ENCODE measurements at regions of chr19 and their contacts with region 1.

Region 1: GRCh38 chr19:53195265-53195903 is 2.2 kb upstream of the ZNF665 start:
- DNase-seq: peak; percentile 74
- ATAC-seq: peak; percentile 69

Region 2: DNA sequence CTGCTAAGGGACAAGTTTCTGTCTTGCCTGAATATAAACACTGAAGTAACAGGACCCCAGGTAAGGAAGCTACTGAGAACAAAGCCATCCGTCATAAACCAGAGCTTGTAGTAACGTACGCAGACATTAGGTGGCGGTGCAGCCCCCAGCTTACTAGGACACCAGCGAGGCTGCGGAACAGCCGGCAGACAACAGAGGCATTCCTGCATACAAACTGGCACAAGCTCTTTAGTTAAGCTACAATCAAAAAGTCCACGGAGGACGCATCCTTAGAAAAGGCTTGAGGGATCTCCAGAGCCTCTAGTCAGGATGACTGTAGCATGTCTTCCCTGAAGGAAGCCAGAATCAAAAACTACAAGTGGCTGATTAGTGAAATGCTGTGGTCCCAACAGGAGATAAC is 118.4 kb before region 1 on chr19:
- intact Hi-C with region 1: loop called (anchors 5 kb)
- DNase-seq: peak; percentile 67
- ATAC-seq: peak; percentile 83

Region 3: DNA sequence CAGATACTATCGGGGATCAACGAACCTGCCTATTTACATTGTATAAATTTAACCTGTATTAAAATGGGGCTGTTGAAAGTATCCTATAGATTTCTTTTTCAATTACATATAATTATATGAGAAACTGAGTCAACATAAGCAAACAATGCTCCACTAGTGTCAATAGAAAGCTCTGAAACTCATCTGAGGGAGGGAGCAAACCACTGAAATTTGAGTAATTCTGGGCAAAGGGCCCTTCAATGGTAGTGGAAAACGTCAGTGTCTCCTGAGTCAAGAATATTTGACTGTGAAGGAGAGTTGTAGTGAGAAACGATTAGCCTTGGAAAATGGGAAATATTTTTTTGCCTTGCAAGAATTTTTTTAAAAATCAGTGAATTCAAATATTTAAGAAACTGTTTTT is 89.7 kb after region 1 on chr19:
- intact Hi-C with region 1: no loop called
- DNase-seq: no peak
- ATAC-seq: no peak

Region 4: DNA sequence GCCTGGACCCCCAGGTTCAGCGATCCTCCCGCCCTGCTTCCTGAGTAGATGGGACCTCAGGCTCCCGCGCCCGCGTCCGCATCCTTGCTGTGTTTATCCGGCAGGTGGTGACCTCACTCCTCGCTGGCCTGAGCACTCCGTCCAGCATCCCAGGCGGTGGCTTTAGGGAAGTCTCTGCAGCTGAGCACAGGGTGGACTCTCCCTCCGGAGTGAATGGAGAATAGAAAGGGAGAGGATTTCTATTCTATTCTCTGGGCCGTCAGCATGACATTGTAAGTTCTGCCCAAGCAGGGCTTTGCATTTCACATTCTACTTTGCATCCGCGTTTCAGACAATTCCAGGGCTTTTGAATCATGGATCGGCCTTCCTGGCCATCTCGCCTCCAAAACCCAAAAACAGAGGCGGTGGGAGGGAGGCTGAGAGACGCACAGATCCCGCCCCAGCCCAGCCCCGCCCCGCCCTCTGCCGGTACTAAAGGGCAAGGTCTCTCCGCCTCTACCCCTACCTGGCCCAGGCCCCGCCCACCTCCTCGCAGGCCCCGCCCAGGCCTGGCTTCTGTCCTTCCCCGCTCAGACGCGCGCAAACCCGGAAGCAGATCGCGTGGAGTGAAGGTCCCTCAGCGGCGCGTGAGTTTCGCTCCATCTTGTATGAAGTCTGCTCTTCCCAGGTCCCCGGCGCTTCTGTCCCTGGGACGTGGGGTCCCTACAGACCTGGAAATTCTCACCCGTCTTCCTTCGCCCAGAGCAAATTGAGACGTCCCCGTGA is 169.9 kb after region 1 on chr19 and contains the start of gene ZNF525:
- intact Hi-C with region 1: loop called (anchors 10 kb)
- DNase-seq: peak; percentile 94
- ATAC-seq: peak; percentile 100
- total RNA-seq, gene ZNF525: 4.7 TPM

Measured in Right ventricle myocardium superior (tissue), 1 donor.